PC-3 (cell line): ENCODE measurements at regions of chr3 and their contacts with region 1.

Region 1: DNA sequence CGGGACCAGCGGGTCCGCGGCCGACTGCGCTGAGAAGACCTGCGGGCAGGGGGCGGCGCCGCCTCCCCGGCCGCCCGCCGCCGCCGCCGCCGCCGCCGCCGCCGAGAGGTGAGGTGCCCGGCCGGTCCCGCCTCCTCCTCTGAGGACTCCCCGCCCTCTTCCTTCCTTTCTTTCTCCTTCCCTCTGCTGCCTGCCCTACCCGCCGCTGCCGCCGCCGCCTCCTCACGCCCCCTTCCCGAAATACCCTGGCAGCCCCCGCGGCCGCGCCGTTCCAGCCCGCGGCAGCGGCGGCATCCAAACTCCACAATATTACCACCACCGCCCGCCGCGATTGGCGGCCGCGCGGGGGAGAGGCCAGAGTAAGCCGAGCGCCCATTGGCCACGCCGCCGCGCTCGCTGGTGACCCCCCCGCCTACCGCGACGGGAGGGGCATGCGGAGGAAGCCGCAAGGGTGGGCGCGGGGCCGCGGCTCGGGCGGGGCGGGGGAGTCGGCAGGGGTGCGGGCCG is 61.8 kb upstream of the ANKRD28 start:
- DNase-seq: peak; percentile 94
- ATAC-seq: peak; percentile 80
- H3K4me3 ChIP-seq: peak overlapping the region; percentile 80
- H3K27ac ChIP-seq: no peak overlapping the region
- H3K4me1 ChIP-seq: peaks cover 23% of the 10 kb centered on the region
- H3K27me3 ChIP-seq: no peaks in the 10 kb centered on the region
- CTCF ChIP-seq: no peak

Region 2: DNA sequence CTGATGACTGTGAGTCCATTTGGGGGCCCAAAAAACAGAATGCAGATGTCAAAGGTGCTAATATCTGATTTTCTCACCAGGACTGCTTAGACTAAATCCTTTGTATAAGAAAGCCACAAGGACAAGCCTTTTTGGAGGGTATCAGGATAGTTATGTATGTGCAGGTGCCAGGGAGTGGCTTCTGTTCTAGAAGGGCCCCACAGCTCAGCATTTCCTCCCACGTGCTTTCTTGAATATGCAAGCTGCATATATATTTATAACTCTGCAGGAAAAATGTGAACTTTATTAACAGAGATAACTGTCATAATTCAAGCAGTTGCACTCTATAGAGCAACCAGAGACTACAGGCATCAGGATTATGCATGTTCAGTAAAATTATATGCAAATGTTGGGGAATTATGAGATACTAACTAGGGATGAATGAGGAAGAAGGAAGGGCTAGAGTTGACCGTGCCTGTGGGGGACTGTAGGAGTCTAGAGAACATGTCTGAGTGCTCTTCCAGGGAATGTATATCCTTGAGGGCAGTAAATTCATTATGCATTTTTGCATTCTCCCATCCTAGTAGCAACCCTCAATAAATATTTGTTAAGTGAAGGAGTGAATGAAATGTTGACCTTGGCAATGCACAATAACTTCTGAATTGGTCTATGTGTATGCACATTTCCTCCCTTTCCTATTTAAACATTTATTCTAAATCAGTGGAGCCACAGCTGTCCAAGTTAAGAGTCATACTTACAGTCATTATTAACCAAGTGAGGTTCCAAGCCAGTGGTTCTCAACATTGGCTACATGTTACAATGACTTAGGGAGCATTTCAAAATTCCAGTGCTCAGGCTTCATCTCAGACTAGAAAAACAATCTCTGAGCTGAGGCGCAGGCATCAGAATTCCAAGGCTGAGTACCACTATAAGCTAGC is 33.0 kb after region 1 on chr3:
- CTCF ChIA-PET with region 1: no interaction called
- POLR2A ChIA-PET with region 1: no interaction called
- intact Hi-C with region 1: loop called (anchors 2 kb)
- DNase-seq: peak; percentile 10
- ATAC-seq: peak; percentile 82
- H3K4me3 ChIP-seq: no peak overlapping the region
- H3K27ac ChIP-seq: no peak overlapping the region
- H3K4me1 ChIP-seq: peaks cover 6% of the 10 kb centered on the region
- H3K27me3 ChIP-seq: no peaks in the 10 kb centered on the region
- CTCF ChIP-seq: no peak

Region 3: GRCh38 chr3:16069149-16069922 is 209.8 kb after region 1 on chr3:
- CTCF ChIA-PET with region 1: no interaction called
- POLR2A ChIA-PET with region 1: no interaction called
- intact Hi-C with region 1: no loop called
- DNase-seq: peak; percentile 97
- ATAC-seq: peak; percentile 50
- H3K4me3 ChIP-seq: no peak overlapping the region
- H3K27ac ChIP-seq: peak overlapping the region; percentile 78
- H3K4me1 ChIP-seq: peaks cover 81% of the 10 kb centered on the region
- H3K27me3 ChIP-seq: no peaks in the 10 kb centered on the region
- CTCF ChIP-seq: no peak